Posterior cingulate gyrus (tissue), 11 donors: ENCODE measurements at regions of chr2 and their contacts with region 1.

Region 1: GRCh38 chr2:85707304-85707703 is 13.1 kb downstream of the GNLY start:
- DNase-seq: peak in 3 of 10 donors; percentile 38 to 51 (median 48)

Region 2: DNA sequence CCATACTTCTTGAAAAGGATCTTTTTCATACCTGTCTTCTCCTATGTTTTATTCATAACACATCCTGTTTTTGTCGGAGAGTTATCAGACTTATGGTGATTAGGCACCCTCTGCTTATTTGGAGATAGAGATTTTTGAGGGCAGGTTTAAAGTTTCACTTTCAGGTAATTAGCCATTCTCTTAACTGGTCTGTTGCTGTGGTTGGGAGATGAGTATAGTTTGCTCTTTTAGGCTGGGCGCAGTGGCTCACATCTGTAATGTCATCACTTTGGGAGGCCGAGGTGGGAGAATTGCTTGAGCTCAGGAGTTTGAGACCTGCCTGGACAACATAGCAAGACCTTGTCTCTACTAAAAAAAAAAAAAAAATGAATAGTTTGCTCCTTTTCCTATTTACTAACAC is 64.6 kb before region 1 on chr2:
- intact Hi-C with region 1: loop called (anchors 1 kb)
- DNase-seq: no peak

Region 3: DNA sequence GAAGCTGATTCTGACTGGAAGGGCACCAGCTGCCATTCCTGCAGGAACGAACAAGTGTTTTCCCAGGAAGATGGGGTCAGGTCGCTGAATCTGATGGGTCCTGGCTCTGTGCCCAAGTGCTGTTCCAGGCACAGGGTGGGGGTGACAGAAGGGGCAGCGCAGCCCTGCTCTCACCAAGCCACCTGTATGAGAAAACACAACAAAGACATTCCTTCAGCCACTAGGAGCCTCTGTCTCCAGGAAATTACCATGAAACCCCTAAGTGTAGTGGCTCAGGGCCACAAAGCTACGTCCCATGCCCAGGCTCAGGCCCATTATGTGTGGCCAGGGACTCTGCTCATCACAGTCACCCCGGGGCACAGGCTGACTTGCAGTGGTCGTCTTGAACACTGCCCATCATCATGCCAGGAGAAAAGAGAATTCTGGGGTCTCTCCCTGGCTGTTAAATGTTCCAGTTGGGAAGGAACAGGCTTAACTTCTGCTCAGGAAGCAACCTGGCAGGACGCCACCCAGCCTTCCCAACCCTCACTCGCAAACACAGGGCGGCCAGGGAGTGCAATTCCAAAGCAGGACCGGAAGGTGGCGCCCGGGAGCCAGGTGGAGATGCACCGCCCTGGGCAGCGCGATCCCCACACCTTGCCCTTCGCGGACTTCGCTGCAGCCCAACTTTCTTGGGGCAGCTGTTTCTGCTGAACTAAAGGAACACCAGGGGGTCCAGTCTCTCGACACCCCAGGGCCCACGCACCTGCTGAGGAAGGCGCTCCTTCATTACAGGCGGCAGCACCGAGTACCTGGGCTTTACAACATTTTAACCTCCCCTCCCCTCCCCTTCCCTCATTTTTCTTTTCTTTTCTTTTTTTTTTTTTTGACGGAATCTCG is 28.3 kb before region 1 on chr2:
- intact Hi-C with region 1: loop called (anchors 2 kb)
- DNase-seq: peak; percentile 58 to 97 (median 80)